Mammary epithelial cell (primary cell): ENCODE measurements at regions of chr20 and their contacts with region 1.

Region 1: DNA sequence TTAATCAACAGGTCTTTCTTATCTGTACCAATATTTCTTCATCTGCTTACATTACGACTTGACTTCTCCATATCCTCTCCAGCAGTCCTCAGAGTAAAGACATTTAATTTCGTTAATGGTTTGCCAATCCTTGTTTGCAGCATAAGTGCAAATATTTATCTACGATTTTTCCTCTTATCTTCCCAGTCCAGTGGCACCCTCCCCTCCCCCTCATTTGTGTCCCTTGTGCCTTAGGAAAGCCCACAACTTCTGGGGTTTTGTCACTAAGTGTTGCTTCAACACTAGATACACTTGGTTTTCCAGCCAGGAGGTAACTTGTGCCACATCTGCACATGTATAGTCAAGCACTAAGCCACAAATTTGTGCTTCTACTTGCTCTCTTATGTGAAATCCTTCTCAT is 327.2 kb downstream of the CBLN4 start:
- DNase-seq: no peak
- H3K4me3 ChIP-seq: no peak overlapping the region
- H3K27ac ChIP-seq: no peak overlapping the region
- H3K4me1 ChIP-seq: no peaks in the 10 kb centered on the region
- H3K27me3 ChIP-seq: peaks cover 3% of the 10 kb centered on the region
- CTCF ChIP-seq: no peak

Region 2: GRCh38 chr20:55500130-55500529 is 178.0 kb before region 1 on chr20:
- CTCF ChIA-PET with region 1: no interaction called
- dilution Hi-C with region 1: no loop called
- in situ Hi-C with region 1: no loop called
- intact Hi-C with region 1: no loop called
- DNase-seq: no peak
- H3K4me3 ChIP-seq: no peak overlapping the region
- H3K27ac ChIP-seq: no peak overlapping the region
- H3K4me1 ChIP-seq: no peaks in the 10 kb centered on the region
- H3K27me3 ChIP-seq: peaks cover 6% of the 10 kb centered on the region
- CTCF ChIP-seq: no peak

Region 3: DNA sequence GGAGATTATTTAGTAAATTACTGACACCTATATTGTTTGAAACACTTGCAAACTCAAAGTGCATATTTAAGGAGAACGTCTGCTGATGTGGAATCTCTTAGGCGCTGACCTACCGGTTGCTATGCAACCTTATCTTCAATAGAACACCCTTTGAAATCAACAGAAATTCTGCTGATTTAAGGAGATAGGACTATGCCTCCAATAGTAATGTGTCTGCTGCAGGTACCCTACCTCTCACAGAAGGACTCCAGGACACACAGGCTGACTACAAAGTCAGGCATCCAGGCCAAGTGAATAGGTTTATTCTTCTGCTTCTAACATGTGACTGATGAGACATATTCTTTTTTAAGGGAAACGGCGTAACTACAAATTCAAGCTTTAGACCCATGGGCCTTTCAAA is 15.5 kb after region 1 on chr20:
- CTCF ChIA-PET with region 1: interaction called, 10 read pairs
- dilution Hi-C with region 1: no loop called
- in situ Hi-C with region 1: no loop called
- intact Hi-C with region 1: no loop called
- DNase-seq: no peak
- H3K4me3 ChIP-seq: no peak overlapping the region
- H3K27ac ChIP-seq: no peak overlapping the region
- H3K4me1 ChIP-seq: no peaks in the 10 kb centered on the region
- H3K27me3 ChIP-seq: peaks cover 3% of the 10 kb centered on the region
- CTCF ChIP-seq: no peak